ENCODE measurements at regions of chr1 and their contacts with region 1.

Region 1: DNA sequence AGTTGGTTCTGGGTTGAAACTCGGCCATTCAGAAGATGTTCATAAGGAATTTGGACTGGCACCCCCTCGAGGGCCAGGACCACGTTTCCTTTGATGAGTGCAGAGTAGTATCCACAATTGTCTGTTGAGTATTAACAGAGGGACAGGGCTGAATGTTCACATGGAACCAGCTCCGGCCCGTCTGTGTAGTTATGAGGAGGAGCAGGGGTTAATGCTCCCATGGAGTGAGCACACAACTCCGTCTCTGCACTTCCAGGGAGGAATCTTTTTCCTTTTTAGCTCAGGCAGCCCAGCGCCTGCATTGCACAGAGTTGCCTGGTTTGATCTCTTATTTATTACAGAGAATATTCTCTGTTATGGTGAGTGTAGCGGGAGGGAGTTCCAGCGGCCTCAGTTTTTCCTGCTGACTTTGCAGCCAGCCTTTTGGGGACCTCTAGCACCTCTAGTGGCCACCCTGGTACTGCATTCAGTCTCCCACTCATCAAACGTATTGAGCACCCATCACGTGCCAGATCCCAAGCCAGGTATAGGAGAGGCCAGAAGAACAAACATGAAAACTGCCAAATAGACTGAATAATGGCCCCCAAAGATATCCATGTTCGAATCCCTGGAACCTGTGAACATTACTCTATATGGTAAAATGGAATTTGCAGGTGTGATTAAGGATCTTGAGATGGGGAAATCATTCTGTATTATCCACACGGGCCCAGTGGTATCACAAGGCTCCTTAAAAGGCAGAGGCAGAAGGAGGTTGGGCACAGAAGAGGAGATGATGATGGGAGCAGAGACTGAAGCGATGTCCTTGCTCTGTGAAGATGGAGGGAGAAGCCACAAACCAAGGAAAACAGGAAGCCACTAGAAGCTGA is 167.7 kb upstream of the CSF3R start:
- DNase-seq: peak; percentile 39 to 84 (median 68)
- H3K4me3 ChIP-seq: peak overlapping the region in 2 of 59 donors; percentile 12 to 19
- H3K27ac ChIP-seq: no peak overlapping the region
- H3K27me3 ChIP-seq: peaks cover 0 to 15% (median 0%) of the 10 kb centered on the region in 45 donors
- CTCF ChIP-seq: peak; percentile 52 to 94 (median 88)

Region 2: DNA sequence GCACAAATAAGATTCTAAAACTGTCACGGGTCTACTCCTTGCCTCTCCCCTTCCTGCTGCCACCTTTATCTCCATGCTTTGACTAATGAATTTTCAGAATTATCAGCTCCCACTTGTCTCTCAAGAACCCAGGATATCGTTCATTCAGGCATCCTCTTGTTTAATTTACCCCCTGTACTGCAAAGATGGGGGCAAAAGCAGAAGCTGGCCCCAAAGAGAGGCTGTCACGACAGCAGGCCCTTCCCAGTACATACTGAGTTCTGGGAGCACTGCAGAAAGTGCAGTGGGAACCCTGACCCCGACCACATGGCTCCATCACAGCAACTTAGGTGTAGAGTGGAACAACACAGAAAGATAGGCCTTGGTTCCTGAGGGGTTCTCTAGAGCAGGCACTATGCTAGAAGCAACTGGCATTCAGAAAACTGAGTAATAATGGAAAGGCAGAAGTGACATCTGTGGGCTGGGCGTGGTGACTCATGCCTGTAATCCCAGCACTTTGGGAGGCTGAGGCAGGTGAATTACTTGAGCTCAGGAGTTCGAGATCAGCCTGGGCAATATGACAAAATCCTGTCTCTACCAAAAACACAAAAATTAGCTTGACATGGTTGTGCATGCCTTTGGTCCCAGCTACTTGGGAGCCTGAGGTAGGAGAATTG is 191.7 kb before region 1 on chr1:
- intact Hi-C with region 1: no loop called
- DNase-seq: no peak
- H3K4me3 ChIP-seq: no peak overlapping the region
- H3K27ac ChIP-seq: no peak overlapping the region
- H3K27me3 ChIP-seq: no peaks in the 10 kb centered on the region
- CTCF ChIP-seq: no peak

Region 3: DNA sequence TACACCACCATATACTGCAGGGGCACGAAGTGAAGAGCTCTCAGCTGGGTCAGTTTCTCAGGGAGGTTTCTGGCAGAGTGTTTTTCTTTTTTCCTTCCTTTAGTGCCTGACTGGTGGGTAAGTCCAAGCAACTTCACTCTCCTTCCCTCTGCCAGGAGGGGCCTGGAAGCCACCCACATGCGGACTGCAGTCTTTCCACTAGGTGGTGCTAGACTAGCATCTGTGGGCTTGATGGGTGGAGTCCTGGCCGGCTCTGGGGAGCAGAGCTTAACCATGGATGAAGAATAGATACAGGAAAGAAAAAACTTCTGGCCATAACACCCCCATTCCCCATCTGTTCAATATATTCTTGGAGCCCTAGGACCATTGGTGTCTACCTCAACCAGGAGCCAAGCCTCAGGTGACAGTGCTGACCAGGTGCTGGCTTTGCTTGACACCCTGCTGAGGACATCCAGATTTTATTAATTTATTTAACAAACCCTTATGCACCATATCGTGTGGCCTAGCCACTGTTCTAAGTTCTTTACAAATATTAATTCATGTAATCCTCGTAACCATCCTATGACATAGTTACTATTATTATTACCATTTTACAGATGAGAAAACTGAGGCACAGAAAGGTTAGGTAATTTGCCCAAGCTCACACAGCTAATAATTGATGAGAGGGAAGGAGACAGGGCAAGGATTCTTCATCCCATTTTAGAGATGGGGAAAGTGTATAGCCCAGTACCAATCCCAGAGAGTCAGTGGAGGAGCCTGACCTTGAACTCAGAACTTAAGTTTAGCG is 41.0 kb before region 1 on chr1:
- intact Hi-C with region 1: loop called (anchors 2 kb)
- DNase-seq: peak; percentile 28 to 81 (median 72)
- H3K4me3 ChIP-seq: no peak overlapping the region
- H3K27ac ChIP-seq: no peak overlapping the region
- H3K27me3 ChIP-seq: peaks cover 0 to 4% (median 0%) of the 10 kb centered on the region in 45 donors
- CTCF ChIP-seq: peak; percentile 53 to 94 (median 84)

Region 4: DNA sequence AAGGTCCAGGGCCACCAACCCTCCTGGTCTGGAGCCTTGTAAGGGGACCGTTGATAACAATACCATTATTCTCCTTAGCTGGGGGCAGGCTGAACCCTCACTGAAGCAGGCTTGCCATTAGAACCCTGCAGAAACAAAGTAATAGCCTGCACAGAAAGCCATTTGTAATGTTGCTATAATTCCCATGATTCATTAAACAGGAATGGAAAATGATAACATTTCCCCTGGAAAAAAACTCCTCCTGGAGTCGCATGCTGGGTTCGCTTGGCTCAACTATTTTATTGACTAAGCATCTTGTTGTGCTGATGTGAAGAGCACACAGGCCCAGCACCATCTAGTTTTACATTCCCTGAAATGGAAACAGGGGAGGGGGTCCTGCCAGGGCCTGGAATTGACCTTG is 12.2 kb before region 1 on chr1:
- intact Hi-C with region 1: no loop called
- DNase-seq: no peak
- H3K4me3 ChIP-seq: no peak overlapping the region
- H3K27ac ChIP-seq: no peak overlapping the region
- H3K27me3 ChIP-seq: peaks cover 0 to 2% (median 0%) of the 10 kb centered on the region in 45 donors
- CTCF ChIP-seq: no peak

Region 5: DNA sequence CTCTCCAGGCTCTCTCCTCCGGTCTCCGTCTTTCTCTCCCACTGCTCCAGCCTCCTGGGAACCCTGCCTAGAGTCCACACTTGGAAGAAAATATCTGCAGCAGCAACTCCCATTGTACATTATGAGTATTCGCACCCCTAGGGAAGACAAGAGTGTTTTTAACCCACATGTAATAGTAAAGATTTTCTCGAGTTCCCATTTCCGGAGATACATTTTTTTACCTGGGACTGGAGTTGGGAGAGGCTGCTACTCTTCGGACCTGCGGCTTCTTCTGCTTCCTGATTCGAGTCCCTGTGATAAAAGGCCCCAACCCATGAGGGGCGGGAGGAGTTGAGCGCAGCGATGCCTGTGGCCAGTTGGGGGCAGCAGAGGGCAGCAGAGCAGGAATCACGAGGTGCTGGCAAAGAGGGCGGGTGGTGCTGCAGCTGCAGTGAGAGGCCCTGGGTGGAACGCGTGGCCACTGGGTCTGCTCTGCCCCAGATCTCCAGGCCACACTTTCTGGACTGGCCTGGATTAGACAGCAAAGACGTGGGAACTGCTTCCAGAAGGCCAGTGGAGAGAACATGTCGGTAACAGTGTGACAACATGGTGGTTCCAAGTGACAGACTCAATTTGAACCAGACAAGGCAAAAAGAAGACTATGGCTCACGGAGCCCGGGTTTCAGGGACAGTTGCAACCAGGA is 53.2 kb after region 1 on chr1:
- intact Hi-C with region 1: loop called (anchors 2 to 5 kb)
- DNase-seq: peak; percentile 59 to 89 (median 84)
- H3K4me3 ChIP-seq: no peak overlapping the region
- H3K27ac ChIP-seq: peak overlapping the region in 53 of 59 donors; percentile 2 to 84 (median 66)
- H3K27me3 ChIP-seq: peaks cover 0 to 10% (median 0%) of the 10 kb centered on the region in 45 donors
- CTCF ChIP-seq: peak; percentile 74 to 99 (median 95)

Region 6: DNA sequence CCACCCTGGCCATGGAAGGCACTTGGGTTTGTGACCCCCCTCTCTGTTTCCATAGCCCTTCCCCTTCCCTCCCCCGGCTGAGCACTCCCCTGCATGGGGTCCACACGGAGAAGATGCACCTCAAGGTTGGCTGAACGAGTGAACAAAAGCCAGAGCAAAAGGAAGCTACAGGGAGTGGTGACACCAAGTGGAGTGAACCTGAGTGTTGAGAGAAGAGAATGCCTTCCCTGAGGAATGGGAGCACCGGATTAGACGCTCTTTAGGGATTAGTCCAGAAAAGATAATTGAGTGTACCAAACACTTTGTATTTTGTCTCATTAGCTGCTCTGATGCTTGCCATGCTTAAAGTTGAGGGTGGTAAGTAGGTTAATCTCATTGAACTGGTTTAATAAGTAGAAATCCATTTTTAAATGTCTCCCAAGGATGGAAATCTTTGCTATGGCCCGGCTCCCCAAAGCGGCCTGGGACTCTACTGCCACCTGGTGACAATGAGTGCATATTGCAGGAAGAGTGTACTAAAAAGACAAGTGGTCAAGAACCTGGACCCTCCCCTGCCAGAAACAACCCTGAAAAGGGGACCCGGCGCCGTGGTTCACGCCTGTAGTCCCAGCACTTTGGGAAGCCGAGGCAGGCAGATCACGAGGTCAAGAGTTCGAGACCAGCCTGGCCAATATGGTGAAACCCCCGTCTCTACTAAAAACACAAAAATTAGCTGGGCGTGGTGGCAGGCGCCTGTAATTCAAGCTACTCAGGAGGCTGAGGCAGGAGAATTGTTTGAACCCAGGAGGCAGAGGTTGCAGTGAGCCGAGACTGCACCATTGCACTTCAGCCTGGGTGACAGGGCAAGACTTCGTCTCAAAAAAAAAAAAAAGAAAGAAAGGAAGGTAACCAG is 673.3 kb after region 1 on chr1:
- intact Hi-C with region 1: loop called in 1 of 2 experiments (anchors 10 kb)
- DNase-seq: no peak
- H3K4me3 ChIP-seq: no peak overlapping the region
- H3K27ac ChIP-seq: no peak overlapping the region
- H3K27me3 ChIP-seq: peaks cover 0 to 11% (median 0%) of the 10 kb centered on the region in 45 donors
- CTCF ChIP-seq: peak in 51 of 56 donors; percentile 15 to 60 (median 44)